SK-MEL-5 (cell line): ENCODE measurements at regions of chr5 and their contacts with region 1.

Region 1: GRCh38 chr5:143222287-143223231 is 180.9 kb downstream of the NR3C1 start:
- DNase-seq: no peak

Region 2: GRCh38 chr5:142324871-142325724 is 897.5 kb before region 1 on chr5 and contains the start of gene SPRY4:
- in situ Hi-C with region 1: loop called (anchors 25 kb)
- DNase-seq: peak; percentile 99
- total RNA-seq, gene SPRY4: 27.0 and 33.6 TPM in 2 replicates

Region 3: GRCh38 chr5:142860270-142860669 is 362.3 kb before region 1 on chr5:
- in situ Hi-C with region 1: no loop called
- DNase-seq: no peak

Region 4: DNA sequence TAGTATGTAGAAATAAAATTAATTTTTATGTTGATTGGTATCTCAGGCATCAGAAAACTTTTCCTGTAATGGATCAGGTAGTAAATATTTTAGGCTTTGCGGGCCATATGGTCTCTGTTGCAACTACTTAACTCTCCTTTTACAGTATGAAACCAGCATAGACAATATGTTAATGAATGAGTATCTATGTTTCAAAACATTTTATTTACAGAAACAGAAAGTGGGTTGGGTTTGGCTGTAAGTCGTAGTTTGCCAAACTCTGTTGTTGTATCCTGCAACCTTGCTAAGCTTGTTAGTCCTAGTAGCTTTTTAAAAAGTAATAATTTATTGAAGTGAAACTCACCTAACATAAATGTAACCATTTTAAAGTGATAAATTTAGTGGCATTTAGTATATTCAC is 48.9 kb after region 1 on chr5:
- in situ Hi-C with region 1: no loop called
- DNase-seq: no peak

Region 5: GRCh38 chr5:143376911-143377813 is 154.6 kb after region 1 on chr5:
- in situ Hi-C with region 1: loop called (anchors 25 kb)
- DNase-seq: no peak